ENCODE measurements at regions of chr10 and their contacts with region 1.

Region 1: DNA sequence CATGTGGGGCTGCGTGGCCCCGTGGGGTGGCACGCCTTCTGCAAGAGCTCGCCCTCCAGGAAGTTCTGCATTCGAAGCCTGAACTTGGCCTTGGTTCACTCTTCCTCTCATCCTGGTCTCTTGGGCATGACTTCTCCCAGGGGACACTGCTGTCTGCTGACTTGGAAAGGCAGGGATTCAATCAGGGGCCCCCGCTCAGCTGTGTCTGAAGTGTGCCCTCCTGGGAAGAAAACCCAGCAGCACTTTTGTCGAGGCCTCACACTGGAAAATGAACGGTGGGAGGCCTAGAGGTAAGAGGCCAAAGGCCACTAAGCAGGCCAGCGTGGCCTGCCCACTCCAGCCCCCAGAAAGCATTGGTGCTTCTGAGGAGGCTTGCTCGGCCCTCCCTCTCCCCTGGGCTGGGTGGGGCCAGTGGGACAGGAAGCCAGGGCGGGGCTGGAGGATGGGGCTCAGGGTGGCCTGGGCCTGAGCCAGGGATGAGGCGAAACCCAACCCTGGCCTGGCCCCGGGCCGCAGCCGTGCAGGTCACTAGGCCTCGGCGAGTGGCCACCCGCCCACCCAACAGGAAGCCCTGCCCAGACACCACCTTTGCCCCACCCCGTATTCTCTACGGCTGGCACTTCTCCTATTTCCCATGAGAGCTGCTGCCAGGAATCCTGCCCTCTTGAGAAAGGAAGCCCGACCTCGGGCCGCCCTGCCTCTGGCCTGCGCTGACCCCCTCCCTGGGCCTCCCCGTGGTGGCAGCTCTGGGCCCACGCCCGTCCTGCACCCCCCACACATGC is 81.1 kb downstream of the ZMIZ1 start:
- DNase-seq: peak; percentile 85 to 88
- ATAC-seq: peak; percentile 55
- H3K4me3 ChIP-seq: no peak overlapping the region
- H3K27ac ChIP-seq: peak overlapping the region in 1 of 2 donors; percentile 0
- H3K4me1 ChIP-seq: peaks cover 0 to 11% of the 10 kb centered on the region in 2 donors
- H3K27me3 ChIP-seq: no peaks in the 10 kb centered on the region

Region 2: GRCh38 chr10:79101560-79102497 is 48.0 kb before region 1 on chr10:
- intact Hi-C with region 1: loop called in 1 of 2 experiments (anchors 5 kb)
- DNase-seq: peak; percentile 84 to 89
- ATAC-seq: peak; percentile 75
- H3K4me3 ChIP-seq: no peak overlapping the region
- H3K27ac ChIP-seq: peak overlapping the region; percentile 6 to 72
- H3K4me1 ChIP-seq: no peaks in the 10 kb centered on the region
- H3K27me3 ChIP-seq: no peaks in the 10 kb centered on the region

Region 3: DNA sequence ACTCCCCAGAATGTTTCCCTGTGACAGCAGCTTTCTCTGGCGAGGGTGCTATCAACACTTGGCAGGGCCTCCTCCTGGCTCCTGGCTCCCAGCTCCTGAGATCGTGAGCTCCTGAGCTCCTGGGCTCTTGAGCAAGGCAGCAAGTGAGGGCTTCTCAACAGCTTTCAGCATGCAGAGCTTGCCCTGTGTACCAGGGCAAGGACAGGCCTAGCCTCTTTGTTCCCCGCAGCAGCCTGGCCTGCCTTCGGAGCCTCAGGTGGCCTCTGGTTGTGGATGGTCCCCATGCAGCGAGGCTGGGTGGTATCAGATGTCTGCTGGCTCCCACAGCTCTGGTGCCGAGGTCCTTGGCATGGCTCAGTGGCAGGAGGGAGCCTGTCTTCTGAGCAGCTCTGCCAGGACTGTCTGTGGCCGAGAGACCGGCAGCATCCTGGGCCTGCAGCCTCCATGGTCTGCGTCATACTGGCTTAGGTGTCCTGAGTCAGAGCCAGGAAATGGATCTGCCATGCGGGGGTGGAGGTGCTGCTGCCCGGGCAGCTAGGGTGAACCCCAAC is 36.9 kb before region 1 on chr10:
- intact Hi-C with region 1: loop called in 1 of 2 experiments (anchors 5 kb)
- DNase-seq: peak in 1 of 2 donors; percentile 83
- ATAC-seq: peak; percentile 33
- H3K4me3 ChIP-seq: no peak overlapping the region
- H3K27ac ChIP-seq: peak overlapping the region in 1 of 2 donors; percentile 10
- H3K4me1 ChIP-seq: no peaks in the 10 kb centered on the region
- H3K27me3 ChIP-seq: no peaks in the 10 kb centered on the region

Measured in aorta (tissue), 5 donors.